PC-9 (cell line): ENCODE measurements at regions of chr6 and their contacts with region 1.

Region 1: GRCh38 chr6:25173951-25174474 is 105.2 kb upstream of the CARMIL1 start:
- DNase-seq: peak; percentile 66 to 98
- H3K4me3 ChIP-seq: no peak overlapping the region
- H3K27ac ChIP-seq: peak overlapping the region; percentile 98
- H3K4me1 ChIP-seq: peaks cover 56% of the 10 kb centered on the region
- H3K27me3 ChIP-seq: no peaks in the 10 kb centered on the region
- CTCF ChIP-seq: no peak

Region 2: DNA sequence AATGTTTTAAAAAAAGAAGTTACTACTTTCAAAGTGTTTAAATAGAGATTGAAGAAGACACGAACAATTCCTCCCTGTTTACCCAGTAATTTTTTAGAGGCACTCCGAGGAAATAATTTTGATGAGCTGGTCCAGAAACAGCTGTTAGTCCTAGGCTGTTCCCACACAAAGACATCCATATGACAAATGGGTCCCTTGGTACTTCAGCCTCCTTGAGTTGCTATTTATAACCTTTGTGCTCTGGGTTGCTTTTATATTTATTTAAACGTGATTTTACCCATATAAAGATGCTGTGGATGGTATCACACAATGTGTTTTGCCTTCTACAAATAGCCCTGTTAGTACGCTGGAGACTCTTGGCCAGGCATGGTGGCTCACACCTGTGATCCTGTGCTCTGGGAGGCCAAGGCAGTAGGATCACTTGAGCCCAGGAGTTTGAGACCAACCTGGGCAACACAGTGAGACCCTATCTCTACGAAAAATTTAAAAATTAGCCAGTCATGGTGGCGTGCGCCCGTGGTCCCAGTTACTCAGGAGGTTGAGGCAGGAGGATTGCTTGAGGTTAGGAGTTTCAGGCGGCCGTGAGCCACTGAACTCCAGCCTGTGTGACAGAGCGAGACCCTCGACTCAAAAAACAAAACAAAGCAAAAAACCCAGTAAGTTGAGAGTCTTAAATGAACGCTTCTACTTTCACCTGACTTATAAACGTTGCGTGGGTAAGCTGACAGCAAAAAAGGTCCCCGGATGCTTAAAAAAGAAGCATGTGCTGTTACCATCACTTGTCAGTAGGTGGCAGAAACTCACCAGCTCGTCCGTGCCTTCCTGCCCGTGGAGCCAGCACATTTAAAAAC is 318.4 kb before region 1 on chr6:
- CTCF ChIA-PET with region 1: no interaction called
- POLR2A ChIA-PET with region 1: no interaction called
- intact Hi-C with region 1: loop called (anchors 2 kb)
- DNase-seq: peak; percentile 44 to 58
- H3K4me3 ChIP-seq: no peak overlapping the region
- H3K27ac ChIP-seq: no peak overlapping the region
- H3K4me1 ChIP-seq: peaks cover 26% of the 10 kb centered on the region
- H3K27me3 ChIP-seq: no peaks in the 10 kb centered on the region
- CTCF ChIP-seq: peak; percentile 89

Region 3: GRCh38 chr6:25193460-25194171 is 19.6 kb after region 1 on chr6:
- CTCF ChIA-PET with region 1: no interaction called
- POLR2A ChIA-PET with region 1: interaction called, 13 read pairs
- intact Hi-C with region 1: no loop called
- DNase-seq: peak; percentile 52 to 81
- H3K4me3 ChIP-seq: peak overlapping the region; percentile 31; the same call in 1 of the 2 replicates
- H3K27ac ChIP-seq: peak overlapping the region; percentile 99
- H3K4me1 ChIP-seq: peaks cover 35% of the 10 kb centered on the region
- H3K27me3 ChIP-seq: no peaks in the 10 kb centered on the region
- CTCF ChIP-seq: no peak

Region 4: GRCh38 chr6:25312703-25313501 is 138.9 kb after region 1 on chr6:
- CTCF ChIA-PET with region 1: no interaction called
- POLR2A ChIA-PET with region 1: interaction called, 24 read pairs
- intact Hi-C with region 1: no loop called
- DNase-seq: peak; percentile 32 to 76
- H3K4me3 ChIP-seq: peak overlapping the region; percentile 11; the same call in 1 of the 2 replicates
- H3K27ac ChIP-seq: peak overlapping the region; percentile 54
- H3K4me1 ChIP-seq: peaks cover 37% of the 10 kb centered on the region
- H3K27me3 ChIP-seq: no peaks in the 10 kb centered on the region
- CTCF ChIP-seq: no peak

Region 5: DNA sequence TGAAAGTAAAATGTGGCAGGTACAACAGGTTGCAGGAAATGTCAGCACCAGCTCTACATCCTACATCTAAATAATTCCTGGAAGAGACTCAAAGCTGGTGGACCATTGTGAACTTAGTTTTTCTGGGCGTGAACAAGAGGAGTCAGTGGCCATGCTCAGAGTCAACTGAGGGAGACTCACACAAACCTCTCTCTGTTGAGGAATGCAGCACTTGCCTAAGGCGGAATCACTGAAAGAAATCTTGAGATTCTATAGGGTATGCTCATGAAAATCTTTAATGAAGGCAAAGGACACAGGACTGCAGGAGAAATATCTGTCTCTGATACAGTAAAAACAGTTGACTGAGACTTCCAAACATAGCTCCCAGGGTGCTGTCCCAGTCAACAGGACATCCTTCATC is 603.0 kb after region 1 on chr6:
- CTCF ChIA-PET with region 1: no interaction called
- POLR2A ChIA-PET with region 1: interaction called, 48 read pairs
- intact Hi-C with region 1: no loop called
- DNase-seq: peak; percentile 47 to 76
- H3K4me3 ChIP-seq: no peak overlapping the region
- H3K27ac ChIP-seq: no peak overlapping the region
- H3K4me1 ChIP-seq: peaks cover 12% of the 10 kb centered on the region; the same call in 1 of the 2 replicates
- H3K27me3 ChIP-seq: no peaks in the 10 kb centered on the region
- CTCF ChIP-seq: no peak